Prostate gland (tissue), 2 donors: ENCODE measurements at regions of chr3 and their contacts with region 1.

Region 1: DNA sequence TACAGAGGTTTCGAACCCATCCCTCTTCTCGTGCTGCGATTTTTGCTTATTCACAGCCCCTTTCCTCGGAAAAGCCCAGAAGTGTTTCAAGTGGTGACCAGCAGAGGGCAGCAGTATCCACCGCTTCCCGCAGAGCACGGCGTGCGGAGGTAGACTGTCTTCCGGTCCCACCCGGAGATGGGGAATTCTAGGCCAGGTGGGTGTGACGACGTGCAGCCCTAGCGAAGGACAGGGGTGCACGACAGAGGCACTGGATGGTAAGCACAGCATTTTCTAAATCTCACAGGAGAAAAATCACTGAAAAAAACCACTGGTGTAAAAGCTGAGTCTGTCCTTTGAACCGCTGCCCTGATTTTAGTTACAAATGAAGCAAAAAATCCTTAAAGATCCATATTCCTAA is 7.4 kb upstream of the PSMD6 start:
- DNase-seq: peak; percentile 63
- H3K4me3 ChIP-seq: no peak overlapping the region
- H3K27ac ChIP-seq: no peak overlapping the region
- H3K4me1 ChIP-seq: no peaks in the 10 kb centered on the region
- H3K27me3 ChIP-seq: no peaks in the 10 kb centered on the region
- CTCF ChIP-seq: peak; percentile 60 to 92 (median 90)
- POLR2A ChIP-seq: no peak

Region 2: DNA sequence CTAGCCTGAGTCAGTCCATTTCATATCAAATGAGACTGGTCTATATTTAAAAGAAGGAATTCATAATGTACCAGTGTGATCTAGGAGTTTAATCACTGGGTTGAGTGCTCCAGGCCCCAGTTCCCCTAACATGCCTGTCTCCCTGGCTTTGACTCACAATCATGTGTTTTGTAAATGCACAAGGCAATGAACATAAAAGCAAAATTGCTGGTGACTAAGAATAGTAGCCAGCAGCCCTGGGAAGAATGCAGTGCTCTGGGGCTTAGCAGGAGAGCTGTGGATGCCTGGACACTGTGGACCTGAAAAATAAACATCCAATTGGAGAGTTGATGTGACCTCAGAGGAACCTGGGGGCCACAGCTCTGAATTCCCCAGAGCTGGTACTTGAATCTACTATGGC is 702.4 kb before region 1 on chr3:
- intact Hi-C with region 1: no loop called
- DNase-seq: no peak
- H3K4me3 ChIP-seq: no peak overlapping the region
- H3K27ac ChIP-seq: no peak overlapping the region
- H3K4me1 ChIP-seq: no peaks in the 10 kb centered on the region
- H3K27me3 ChIP-seq: no peaks in the 10 kb centered on the region
- CTCF ChIP-seq: no peak
- POLR2A ChIP-seq: no peak

Region 3: DNA sequence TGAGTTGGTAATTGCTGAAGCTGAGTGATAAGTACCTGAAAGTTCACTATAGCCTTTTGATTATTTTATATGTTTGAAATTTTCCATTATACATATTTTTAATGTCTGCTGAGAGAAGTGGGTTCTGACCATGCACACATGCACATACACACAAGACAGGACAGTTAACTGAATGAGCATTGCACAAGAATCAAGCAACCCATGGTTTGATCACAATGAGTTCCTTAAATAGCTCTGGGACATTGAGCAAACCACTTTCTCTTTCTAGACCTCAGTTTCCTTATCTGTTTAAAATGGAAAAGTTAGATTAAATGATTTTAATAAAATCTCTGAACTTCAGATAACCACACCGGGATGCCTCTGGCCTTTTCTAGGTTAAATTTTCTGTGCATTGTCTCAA is 351.6 kb before region 1 on chr3:
- intact Hi-C with region 1: no loop called
- DNase-seq: no peak
- H3K4me3 ChIP-seq: no peak overlapping the region
- H3K27ac ChIP-seq: no peak overlapping the region
- H3K4me1 ChIP-seq: no peaks in the 10 kb centered on the region
- H3K27me3 ChIP-seq: no peaks in the 10 kb centered on the region
- CTCF ChIP-seq: no peak
- POLR2A ChIP-seq: no peak

Region 4: DNA sequence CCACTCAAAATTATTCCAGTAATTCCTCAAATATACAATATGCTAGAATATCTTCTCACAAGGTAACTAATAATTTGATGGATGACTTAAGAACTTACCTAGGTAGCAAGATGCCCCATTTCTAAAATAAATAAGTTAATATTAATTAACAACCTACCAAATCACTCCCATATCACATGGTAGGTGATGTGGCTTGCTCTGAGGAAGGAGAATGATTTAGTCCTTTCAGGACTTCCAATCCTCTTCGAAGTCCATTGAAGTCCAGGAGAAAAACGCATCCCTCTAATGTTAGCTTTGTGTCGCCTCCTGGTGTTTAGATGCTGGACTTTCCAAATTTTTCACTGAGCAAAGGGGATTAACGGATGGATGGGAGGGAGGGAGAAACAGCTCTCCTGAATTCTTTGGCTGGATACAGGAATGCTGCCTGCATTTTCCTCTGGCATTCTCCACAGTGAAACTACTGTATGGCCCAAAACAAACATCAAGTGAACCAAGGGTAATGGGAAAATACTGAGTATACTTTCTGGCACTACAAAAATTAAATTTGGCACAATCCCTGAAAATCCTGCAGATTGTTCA is 135.9 kb after region 1 on chr3:
- intact Hi-C with region 1: loop called (anchors 5 kb)
- DNase-seq: no peak
- H3K4me3 ChIP-seq: no peak overlapping the region
- H3K27ac ChIP-seq: peak overlapping the region; percentile 4 to 40
- H3K4me1 ChIP-seq: peaks cover 8% of the 10 kb centered on the region
- H3K27me3 ChIP-seq: no peaks in the 10 kb centered on the region
- CTCF ChIP-seq: peak in 1 of 4 experiments; percentile 45
- POLR2A ChIP-seq: no peak

Region 5: DNA sequence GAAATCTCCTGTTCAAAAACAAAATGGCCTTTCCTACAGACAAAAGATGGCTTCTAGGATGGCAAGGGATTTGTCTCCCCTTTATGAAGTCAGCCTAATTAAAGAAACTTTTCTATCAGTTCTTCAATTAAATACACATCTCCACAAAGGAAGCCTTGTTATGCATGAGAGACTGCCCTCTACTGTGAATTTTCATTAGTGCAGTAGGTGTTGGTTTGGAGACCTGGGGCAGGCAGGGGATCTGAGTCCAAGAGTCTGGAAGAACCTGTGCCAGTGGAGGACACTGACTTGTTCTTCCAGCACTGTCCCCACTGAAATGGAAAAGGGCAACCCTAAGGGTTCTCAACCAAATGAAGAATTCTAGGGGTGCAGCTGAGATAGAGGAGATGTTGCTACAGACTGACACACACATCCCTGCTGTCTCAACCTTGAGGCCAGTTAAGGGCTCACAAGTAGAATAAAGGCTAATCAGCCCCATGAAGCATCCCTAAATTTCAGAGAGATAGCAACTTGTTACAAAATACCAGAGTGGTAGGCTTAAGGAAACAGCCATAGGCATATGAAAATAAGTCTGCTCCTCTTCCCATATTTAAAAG is 368.6 kb after region 1 on chr3:
- intact Hi-C with region 1: loop called (anchors 2 kb)
- DNase-seq: peak; percentile 46
- H3K4me3 ChIP-seq: no peak overlapping the region
- H3K27ac ChIP-seq: no peak overlapping the region
- H3K4me1 ChIP-seq: no peaks in the 10 kb centered on the region
- H3K27me3 ChIP-seq: no peaks in the 10 kb centered on the region
- CTCF ChIP-seq: peak; percentile 65 to 79 (median 73)
- POLR2A ChIP-seq: no peak

Region 6: GRCh38 chr3:64484289-64484992 is 453.7 kb after region 1 on chr3:
- intact Hi-C with region 1: loop called (anchors 2 kb)
- DNase-seq: peak; percentile 77
- H3K4me3 ChIP-seq: no peak overlapping the region
- H3K27ac ChIP-seq: no peak overlapping the region
- H3K4me1 ChIP-seq: no peaks in the 10 kb centered on the region
- H3K27me3 ChIP-seq: no peaks in the 10 kb centered on the region
- CTCF ChIP-seq: peak; percentile 47 to 92 (median 84)
- POLR2A ChIP-seq: no peak